Left colon (tissue), 2 donors: ENCODE measurements at regions of chr16 and their contacts with region 1.

Region 1: DNA sequence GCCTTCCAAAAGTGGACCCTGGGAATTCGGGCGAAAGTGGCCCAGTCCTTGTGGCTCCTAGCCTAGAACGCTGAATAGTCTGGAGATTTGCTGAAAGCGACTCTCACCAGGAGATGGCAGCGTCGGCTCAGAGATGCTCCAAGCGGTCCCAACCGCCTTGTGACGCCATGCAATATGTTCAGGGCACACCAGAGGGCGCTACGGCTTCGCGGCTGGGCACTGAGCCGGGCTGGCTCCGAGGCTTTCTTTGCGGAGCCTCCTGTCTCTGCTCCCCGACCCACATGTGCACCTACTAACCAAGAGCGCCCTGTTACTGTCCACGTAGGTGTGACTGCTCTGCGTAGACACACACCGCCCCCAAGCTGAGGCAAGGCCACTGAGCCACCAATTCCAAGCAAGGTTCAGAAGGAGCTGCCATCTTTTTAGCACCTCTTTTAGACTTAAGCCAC is 36.9 kb downstream of the SYCE1L start:
- DNase-seq: peak; percentile 72 to 91
- ATAC-seq: peak; percentile 100

Region 2: GRCh38 chr16:77581706-77582105 is 345.6 kb after region 1 on chr16:
- intact Hi-C with region 1: loop called in 1 of 2 experiments (anchors 2 kb)
- DNase-seq: no peak
- ATAC-seq: no peak